ENCODE measurements at regions of chr2 and their contacts with region 1.

Region 1: DNA sequence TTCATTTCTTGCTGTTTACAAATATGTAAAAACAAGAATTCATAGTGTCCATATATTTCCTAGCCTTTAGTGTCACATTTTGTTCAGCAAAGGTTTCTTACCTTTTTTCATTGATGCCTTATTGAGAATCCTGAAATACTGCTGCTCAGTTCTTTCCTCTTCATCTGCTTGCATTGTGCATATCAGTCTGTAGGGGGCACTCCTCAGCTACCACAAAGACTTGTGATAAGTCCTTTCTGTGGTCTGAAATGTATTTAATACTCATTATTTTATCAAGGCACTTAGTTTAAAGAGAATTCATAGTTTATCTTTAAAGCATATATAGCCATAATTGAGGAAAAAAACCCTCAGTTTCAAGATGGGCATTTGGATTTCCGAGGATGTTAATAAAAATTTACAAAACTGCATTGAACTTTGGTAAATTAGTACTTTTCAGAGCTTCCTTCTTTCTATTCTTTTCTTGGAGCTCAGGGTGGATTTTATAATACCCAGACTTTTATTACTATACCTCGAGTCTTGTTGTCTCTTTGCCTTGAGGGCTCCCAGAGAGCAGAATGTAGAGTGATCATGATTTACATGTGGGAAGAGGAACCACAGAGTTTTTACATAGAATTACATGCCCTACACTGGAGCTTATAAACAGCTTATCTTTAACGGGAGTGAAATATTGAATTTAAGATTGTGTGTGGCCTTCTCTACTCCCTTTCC is 570.1 kb downstream of the PLCL1 start:
- DNase-seq: peak; percentile 52
- H3K4me3 Mint-ChIP-seq: no peak overlapping the region
- H3K27ac Mint-ChIP-seq: no peak overlapping the region
- H3K4me1 Mint-ChIP-seq: no peaks in the 10 kb centered on the region
- H3K27me3 Mint-ChIP-seq: no peaks in the 10 kb centered on the region
- CTCF ChIP-seq: peak; percentile 71

Region 2: DNA sequence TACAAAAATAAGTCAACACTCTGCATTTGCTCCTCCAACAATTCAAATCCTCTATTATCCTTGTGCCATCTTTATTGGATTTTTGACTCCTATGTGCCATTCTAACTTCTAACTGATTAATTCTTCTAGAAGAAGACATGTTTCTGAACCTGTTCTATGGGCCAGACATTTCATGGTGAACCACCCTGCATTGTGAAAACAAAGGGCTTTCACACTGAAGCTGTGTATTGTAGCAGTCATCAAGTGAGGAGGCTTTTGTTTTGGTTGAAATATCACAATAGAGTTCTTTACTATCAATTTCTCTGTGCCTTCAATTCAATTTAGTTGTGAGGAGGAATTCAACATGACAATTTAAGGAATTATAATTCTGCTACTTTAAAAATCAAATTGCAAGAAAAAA is 212.3 kb before region 1 on chr2:
- CTCF ChIA-PET with region 1: no interaction called
- intact Hi-C with region 1: no loop called
- DNase-seq: no peak
- H3K4me3 Mint-ChIP-seq: no peak overlapping the region
- H3K27ac Mint-ChIP-seq: no peak overlapping the region
- H3K4me1 Mint-ChIP-seq: no peaks in the 10 kb centered on the region
- H3K27me3 Mint-ChIP-seq: peaks cover 11% of the 10 kb centered on the region
- CTCF ChIP-seq: no peak

Region 3: GRCh38 chr2:198173242-198173641 is 201.3 kb before region 1 on chr2:
- CTCF ChIA-PET with region 1: no interaction called
- intact Hi-C with region 1: no loop called
- DNase-seq: no peak
- H3K4me3 Mint-ChIP-seq: no peak overlapping the region
- H3K27ac Mint-ChIP-seq: no peak overlapping the region
- H3K4me1 Mint-ChIP-seq: no peaks in the 10 kb centered on the region
- H3K27me3 Mint-ChIP-seq: no peaks in the 10 kb centered on the region
- CTCF ChIP-seq: no peak

Region 4: GRCh38 chr2:198852248-198852647 is 477.7 kb after region 1 on chr2:
- CTCF ChIA-PET with region 1: no interaction called
- intact Hi-C with region 1: no loop called
- DNase-seq: no peak
- H3K4me3 Mint-ChIP-seq: no peak overlapping the region
- H3K27ac Mint-ChIP-seq: no peak overlapping the region
- H3K4me1 Mint-ChIP-seq: no peaks in the 10 kb centered on the region
- H3K27me3 Mint-ChIP-seq: no peaks in the 10 kb centered on the region
- CTCF ChIP-seq: no peak

Region 5: DNA sequence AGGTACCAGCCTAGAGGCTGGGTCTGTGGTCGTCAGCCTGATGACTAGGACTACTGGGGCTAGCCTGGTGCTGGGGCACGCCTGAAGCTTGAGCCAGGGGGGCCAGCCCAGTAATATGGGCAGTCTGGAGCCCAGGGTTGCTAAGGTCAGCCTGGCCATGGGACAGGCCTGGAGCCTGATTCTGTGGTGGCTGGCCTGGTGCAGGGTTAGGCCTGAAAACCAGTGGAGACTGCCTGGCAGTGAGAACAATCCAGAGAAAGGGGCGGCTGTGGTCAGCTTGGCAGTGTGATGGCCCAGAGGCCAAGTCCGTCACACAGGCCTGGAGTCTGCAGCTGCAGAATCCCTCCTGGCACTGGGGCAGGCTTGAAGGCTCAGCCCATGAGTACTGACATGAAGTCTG is 637.4 kb after region 1 on chr2:
- CTCF ChIA-PET with region 1: no interaction called
- intact Hi-C with region 1: loop called (anchors 10 kb)
- DNase-seq: no peak
- H3K4me3 Mint-ChIP-seq: no peak overlapping the region
- H3K27ac Mint-ChIP-seq: no peak overlapping the region
- H3K4me1 Mint-ChIP-seq: no peaks in the 10 kb centered on the region
- H3K27me3 Mint-ChIP-seq: no peaks in the 10 kb centered on the region
- CTCF ChIP-seq: no peak

Region 6: GRCh38 chr2:199488772-199489400 is 1114.4 kb after region 1 on chr2:
- CTCF ChIA-PET with region 1: interaction called, 4 read pairs
- intact Hi-C with region 1: loop called (anchors 5 kb)
- DNase-seq: peak; percentile 85
- H3K4me3 Mint-ChIP-seq: no peak overlapping the region
- H3K27ac Mint-ChIP-seq: no peak overlapping the region
- H3K4me1 Mint-ChIP-seq: no peaks in the 10 kb centered on the region
- H3K27me3 Mint-ChIP-seq: no peaks in the 10 kb centered on the region
- CTCF ChIP-seq: peak; percentile 78

Region 7: GRCh38 chr2:199646439-199646838 is 1271.9 kb after region 1 on chr2:
- CTCF ChIA-PET with region 1: no interaction called
- intact Hi-C with region 1: no loop called
- DNase-seq: no peak
- H3K4me3 Mint-ChIP-seq: no peak overlapping the region
- H3K27ac Mint-ChIP-seq: no peak overlapping the region
- H3K4me1 Mint-ChIP-seq: no peaks in the 10 kb centered on the region
- H3K27me3 Mint-ChIP-seq: no peaks in the 10 kb centered on the region
- CTCF ChIP-seq: no peak

Measured in Calu3 (cell line).